ENCODE measurements at regions of chr12 and their contacts with region 1.

Region 1: DNA sequence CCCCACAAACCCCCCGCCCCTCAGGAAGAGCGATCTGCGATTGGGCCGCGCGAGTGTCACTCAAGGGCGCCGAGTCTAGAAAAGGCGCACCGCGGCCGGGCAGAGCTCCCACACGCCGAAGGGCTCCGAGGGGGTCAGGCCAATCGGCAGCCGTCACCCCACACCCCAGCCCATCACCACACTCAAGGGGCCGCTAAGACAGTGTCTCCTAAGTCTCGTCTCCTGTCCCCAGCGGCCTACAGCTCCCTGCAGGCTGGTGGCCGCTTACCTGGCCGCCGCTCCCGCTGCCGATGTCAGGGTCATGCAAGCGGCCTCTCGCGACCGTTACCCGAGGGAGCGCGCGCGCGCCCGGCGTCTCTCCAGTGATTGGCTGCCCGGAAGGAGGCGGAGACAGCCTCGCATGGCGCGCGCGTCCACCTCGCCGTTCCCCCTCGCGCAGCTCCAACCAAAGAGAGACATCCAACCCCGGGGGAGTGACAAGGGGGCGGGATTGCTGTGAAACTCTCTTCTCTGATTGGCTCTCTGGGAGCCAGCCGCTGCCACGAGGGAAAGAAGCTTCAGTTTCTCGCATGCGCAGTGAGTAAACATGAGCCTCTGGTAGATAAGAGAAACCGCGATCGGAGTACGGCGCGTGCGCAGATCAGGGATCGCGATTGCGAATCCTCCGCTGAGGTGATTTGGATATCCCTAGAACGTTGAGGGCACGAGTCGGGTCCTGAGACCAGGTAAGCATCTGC is at the starts of genes MPHOSPH9 and MTRFR:
- DNase-seq: peak; percentile 98 to 100
- H3K4me3 ChIP-seq: peak within 1 kb of the TSS; percentile 85 to 97 (median 92)
- H3K27ac ChIP-seq: peak within 1 kb of the TSS; percentile 90 to 97 (median 96)
- H3K4me1 ChIP-seq: peaks cover 38 to 82% (median 64%) of the 10 kb centered on the region in 4 donors
- H3K27me3 ChIP-seq: no peaks in the 10 kb centered on the region
- CTCF ChIP-seq: no peak
- EP300 ChIP-seq: no peak
- POLR2A ChIP-seq: peak in 2 of 4 donors; percentile 85 to 86
- total RNA-seq, gene MPHOSPH9: 44.6 to 288 (median 57.3) TPM
- total RNA-seq, gene MTRFR: 3.1 to 20.0 (median 9.9) TPM in 4 of 5 donors, not detected in the other

Region 2: GRCh38 chr12:122980183-122981046 is 252.6 kb before region 1 on chr12 and contains the start of gene ARL6IP4:
- intact Hi-C with region 1: loop called (anchors 10 kb)
- DNase-seq: peak; percentile 70 to 91
- H3K4me3 ChIP-seq: peak within 1 kb of the TSS; percentile 94 to 100 (median 98)
- H3K27ac ChIP-seq: peak within 1 kb of the TSS; percentile 88 to 93 (median 91)
- H3K4me1 ChIP-seq: peaks cover 73 to 91% (median 91%) of the 10 kb centered on the region in 4 donors
- H3K27me3 ChIP-seq: no peaks in the 10 kb centered on the region
- CTCF ChIP-seq: no peak
- EP300 ChIP-seq: no peak
- POLR2A ChIP-seq: no peak
- total RNA-seq, gene ARL6IP4: 104 to 294 (median 181) TPM

Region 3: DNA sequence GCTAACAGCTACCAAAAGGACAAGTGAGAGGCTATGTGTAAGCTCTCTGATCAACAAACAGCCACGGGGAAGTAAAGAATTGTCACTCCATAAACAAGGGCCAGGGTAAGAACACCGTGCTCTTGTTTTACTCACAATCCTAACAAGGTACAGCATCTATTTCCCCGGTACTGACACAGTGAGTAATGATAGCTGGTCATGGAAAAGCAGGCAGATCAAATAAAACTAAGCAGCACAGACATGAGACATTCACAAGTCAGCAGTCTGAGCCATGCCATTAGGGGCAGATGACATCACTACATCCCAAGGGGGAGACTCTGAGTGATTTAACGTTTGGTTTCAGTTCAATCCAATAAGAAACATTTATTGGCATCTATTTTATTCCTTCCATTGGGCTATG is 198.1 kb before region 1 on chr12:
- intact Hi-C with region 1: loop called (anchors 10 kb)
- DNase-seq: no peak
- H3K4me3 ChIP-seq: no peak overlapping the region
- H3K27ac ChIP-seq: peak overlapping the region in 1 of 5 donors; percentile 24
- H3K4me1 ChIP-seq: peaks cover 0 to 12% (median 0%) of the 10 kb centered on the region in 4 donors
- H3K27me3 ChIP-seq: no peaks in the 10 kb centered on the region
- CTCF ChIP-seq: no peak
- EP300 ChIP-seq: no peak
- POLR2A ChIP-seq: no peak

Region 4: GRCh38 chr12:123187637-123188036 is 45.3 kb before region 1 on chr12:
- intact Hi-C with region 1: no loop called
- DNase-seq: no peak
- H3K4me3 ChIP-seq: no peak overlapping the region
- H3K27ac ChIP-seq: no peak overlapping the region
- H3K4me1 ChIP-seq: no peaks in the 10 kb centered on the region
- H3K27me3 ChIP-seq: no peaks in the 10 kb centered on the region
- CTCF ChIP-seq: no peak
- EP300 ChIP-seq: no peak
- POLR2A ChIP-seq: no peak